ENCODE measurements at regions of chr2 and their contacts with region 1.

Region 1: DNA sequence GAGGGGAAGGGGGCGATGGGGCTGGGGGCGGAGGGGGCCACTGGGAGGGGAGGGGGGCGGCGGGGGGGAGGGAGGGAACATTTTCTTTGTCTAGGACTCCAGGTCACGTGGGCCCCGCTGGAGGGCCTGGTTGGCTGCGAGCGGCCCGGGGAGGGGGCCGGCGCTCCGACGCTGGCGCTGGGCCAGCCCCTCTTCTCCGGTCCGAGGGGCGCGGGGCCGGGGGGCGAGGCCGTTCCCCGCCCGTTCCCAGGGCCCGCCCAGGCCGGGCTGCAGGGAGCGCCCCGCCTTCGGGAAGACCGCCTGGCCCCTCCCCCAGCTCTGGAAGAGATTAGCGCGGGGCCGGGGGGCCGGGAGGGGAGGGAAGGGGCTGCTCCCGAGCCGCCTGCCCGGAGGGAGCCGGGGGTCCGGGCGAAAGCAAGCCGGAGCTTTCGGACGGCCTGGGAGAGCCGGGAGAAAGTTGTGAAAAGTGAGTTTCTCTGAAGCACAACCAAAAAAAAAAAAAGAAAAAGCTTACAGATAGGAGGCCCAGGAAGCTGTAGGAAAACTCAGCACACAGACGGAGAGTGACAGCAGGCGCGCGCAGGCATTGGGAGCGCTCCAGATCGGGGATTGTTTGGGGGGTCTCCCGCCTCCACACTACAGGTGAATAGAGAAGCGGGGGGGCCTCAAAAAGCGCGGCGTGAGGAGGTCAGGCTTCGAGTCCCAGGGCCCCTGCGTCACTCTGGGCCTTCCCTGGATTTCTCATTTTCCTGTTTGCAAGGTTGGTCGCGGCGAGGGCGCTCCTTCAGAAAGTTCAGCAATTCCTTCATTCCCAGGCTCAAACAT is 84.1 kb upstream of the POMC start:
- DNase-seq: peak; percentile 82
- H3K4me3 ChIP-seq: peak overlapping the region in 2 of 3 experiments; percentile 19 to 59
- H3K27ac ChIP-seq: peak overlapping the region; percentile 74
- H3K4me1 ChIP-seq: peaks cover 21% of the 10 kb centered on the region
- H3K27me3 ChIP-seq: no peaks in the 10 kb centered on the region
- CTCF ChIP-seq: no peak
- POLR2A ChIP-seq: no peak

Region 2: GRCh38 chr2:25215948-25216679 is 36.4 kb before region 1 on chr2:
- CTCF ChIA-PET with region 1: no interaction called
- POLR2A ChIA-PET with region 1: no interaction called
- dilution Hi-C with region 1: no loop called
- intact Hi-C with region 1: no loop called
- DNase-seq: peak; percentile 35
- H3K4me3 ChIP-seq: peak overlapping the region; percentile 36 to 65 (median 39)
- H3K27ac ChIP-seq: no peak overlapping the region
- H3K4me1 ChIP-seq: no peaks in the 10 kb centered on the region
- H3K27me3 ChIP-seq: no peaks in the 10 kb centered on the region
- CTCF ChIP-seq: no peak
- POLR2A ChIP-seq: peak; percentile 72

Region 3: GRCh38 chr2:25294573-25295462 is 42.3 kb after region 1 on chr2:
- CTCF ChIA-PET with region 1: interaction called, 3 read pairs
- POLR2A ChIA-PET with region 1: interaction called, 3 read pairs
- dilution Hi-C with region 1: no loop called
- intact Hi-C with region 1: loop called (anchors 1 kb)
- DNase-seq: peak; percentile 81
- H3K4me3 ChIP-seq: no peak overlapping the region
- H3K27ac ChIP-seq: peak overlapping the region; percentile 68
- H3K4me1 ChIP-seq: peaks cover 38% of the 10 kb centered on the region
- H3K27me3 ChIP-seq: no peaks in the 10 kb centered on the region
- CTCF ChIP-seq: no peak
- POLR2A ChIP-seq: peak; percentile 76

Measured in endothelial cell of umbilical vein (primary cell).